Activated T-helper 1 cell treated with anti-CD3 and anti-CD28 coated beads, Interleukin-12 subunit alpha, Interleukin-12 subunit beta, Interleukin-2, Interleukin-4 antibody, amounts not matched to agents 30 ng/mL and 10 ng/mL and 1 ng/mL, durations not matched to agents 14 hours and 24 hours and 36 hours (primary cell): ENCODE measurements at regions of chr12 and their contacts with region 1.

Region 1: DNA sequence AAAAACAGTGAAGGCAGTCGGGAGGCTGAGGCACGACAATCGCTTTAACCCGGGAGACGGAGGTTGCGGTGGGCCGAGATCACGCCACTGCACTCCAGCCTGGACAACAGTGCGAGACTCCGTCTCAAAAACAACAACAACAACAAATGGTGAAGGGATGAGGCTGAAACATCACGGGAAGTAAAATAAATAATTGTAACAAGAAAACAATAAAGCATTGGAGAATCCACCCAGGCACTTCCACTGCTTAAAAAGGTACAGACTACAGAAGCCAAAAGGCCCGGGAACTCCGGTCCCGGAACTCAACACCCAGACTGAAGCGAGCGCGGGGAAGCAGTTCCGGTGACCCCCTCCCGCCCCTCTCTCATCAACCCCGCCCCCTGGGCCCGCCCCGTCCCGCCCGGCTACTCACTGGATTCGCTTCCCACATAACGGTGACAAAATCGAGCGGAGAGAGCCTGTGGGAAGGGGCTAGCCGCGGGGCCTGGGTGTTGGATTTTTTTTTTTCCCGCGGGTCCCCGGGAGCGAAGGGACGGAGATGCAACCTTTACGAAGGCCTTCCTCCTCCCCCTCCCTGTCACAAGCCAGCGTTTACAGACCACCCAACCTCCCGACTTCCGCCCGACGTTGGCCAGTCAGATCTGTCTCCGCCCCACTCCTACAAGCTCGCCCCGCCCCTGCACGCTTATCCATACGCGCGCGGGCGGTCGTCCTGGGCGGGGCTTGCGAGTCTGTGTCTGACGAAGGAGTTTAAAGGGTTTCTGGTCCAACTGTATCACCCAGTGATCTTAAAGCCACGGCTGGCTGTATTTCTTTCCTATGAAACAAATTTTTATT is at the start of gene PARP11:
- DNase-seq: peak; percentile 96
- H3K4me3 Mint-ChIP-seq: peak within 1 kb of the TSS; percentile 98
- H3K27ac Mint-ChIP-seq: peak within 1 kb of the TSS; percentile 99
- H3K4me1 Mint-ChIP-seq: peaks cover 52% of the 10 kb centered on the region
- H3K27me3 Mint-ChIP-seq: no peaks in the 10 kb centered on the region
- total RNA-seq, gene PARP11: 13.2 and 13.9 TPM in 2 replicates

Region 2: DNA sequence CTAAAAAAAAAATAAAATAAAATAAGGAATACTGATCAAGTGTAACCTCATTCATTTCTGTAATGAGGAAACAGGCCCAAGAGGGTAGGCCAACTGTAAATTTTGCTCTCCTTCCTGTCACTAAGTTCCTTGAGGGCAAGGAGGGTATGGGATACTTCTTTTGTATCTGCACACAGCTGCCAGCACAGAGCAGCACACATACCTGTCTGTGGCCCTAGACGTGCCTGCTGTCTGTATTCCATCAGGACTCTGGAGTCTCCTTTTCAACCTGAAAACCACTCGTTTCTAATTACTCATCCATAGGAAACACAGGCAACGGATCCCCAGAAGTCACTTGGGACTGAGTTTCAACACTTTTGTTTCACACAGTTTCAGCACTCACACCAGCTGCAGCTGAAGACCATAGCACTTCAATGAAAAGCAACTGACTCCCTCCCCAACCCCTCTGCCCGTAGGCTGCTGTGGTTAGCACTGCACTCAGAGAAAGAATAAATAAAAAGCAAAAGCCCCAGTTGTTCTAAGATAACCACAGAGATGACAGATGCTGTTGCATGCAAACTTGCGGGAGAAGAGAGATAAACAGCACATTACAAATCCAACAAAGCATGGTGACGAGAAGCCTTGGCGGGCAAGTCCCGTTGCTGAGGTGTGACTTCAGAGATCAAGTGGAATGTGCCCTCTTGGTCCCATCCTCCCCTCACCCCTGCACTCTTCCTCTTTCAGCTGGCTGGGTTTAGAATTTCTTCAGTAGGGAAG is 145.0 kb before region 1 on chr12:
- intact Hi-C with region 1: loop called (anchors 5 kb)
- DNase-seq: peak; percentile 69
- H3K4me3 Mint-ChIP-seq: peak overlapping the region; percentile 83
- H3K27ac Mint-ChIP-seq: peak overlapping the region; percentile 95
- H3K4me1 Mint-ChIP-seq: peaks cover 46% of the 10 kb centered on the region
- H3K27me3 Mint-ChIP-seq: no peaks in the 10 kb centered on the region

Region 3: GRCh38 chr12:3973978-3974644 is 101.1 kb after region 1 on chr12:
- intact Hi-C with region 1: loop called (anchors 1 kb)
- DNase-seq: no peak
- H3K4me3 Mint-ChIP-seq: peak overlapping the region; percentile 49
- H3K27ac Mint-ChIP-seq: peak overlapping the region; percentile 56
- H3K4me1 Mint-ChIP-seq: peaks cover 56% of the 10 kb centered on the region
- H3K27me3 Mint-ChIP-seq: no peaks in the 10 kb centered on the region

Region 4: GRCh38 chr12:4143896-4144295 is 270.9 kb after region 1 on chr12:
- intact Hi-C with region 1: loop called (anchors 5 kb)
- DNase-seq: no peak
- H3K4me3 Mint-ChIP-seq: peak overlapping the region; percentile 23
- H3K27ac Mint-ChIP-seq: peak overlapping the region; percentile 68
- H3K4me1 Mint-ChIP-seq: peaks cover 97% of the 10 kb centered on the region
- H3K27me3 Mint-ChIP-seq: no peaks in the 10 kb centered on the region

Region 5: GRCh38 chr12:4320853-4321701 is 448.1 kb after region 1 on chr12 and contains the start of gene TIGAR:
- intact Hi-C with region 1: loop called (anchors 1 kb)
- DNase-seq: peak; percentile 93
- H3K4me3 Mint-ChIP-seq: peak within 1 kb of the TSS; percentile 93
- H3K27ac Mint-ChIP-seq: peak within 1 kb of the TSS; percentile 93
- H3K4me1 Mint-ChIP-seq: peaks cover 45% of the 10 kb centered on the region
- H3K27me3 Mint-ChIP-seq: no peaks in the 10 kb centered on the region
- total RNA-seq, gene TIGAR: 14.4 TPM in 2 replicates

Region 6: GRCh38 chr12:4538207-4539160 is 665.5 kb after region 1 on chr12 and contains the start of gene RAD51AP1:
- intact Hi-C with region 1: loop called (anchors 1 kb)
- DNase-seq: peak; percentile 93
- H3K4me3 Mint-ChIP-seq: peak within 1 kb of the TSS; percentile 98
- H3K27ac Mint-ChIP-seq: peak within 1 kb of the TSS; percentile 91
- H3K4me1 Mint-ChIP-seq: peaks cover 30% of the 10 kb centered on the region
- H3K27me3 Mint-ChIP-seq: peaks cover 2% of the 10 kb centered on the region
- total RNA-seq, gene RAD51AP1: 34.1 and 39.4 TPM in 2 replicates